ENCODE measurements at regions of chrX and their contacts with region 1.

Region 1: GRCh38 chrX:68908071-68908470 is 79.2 kb downstream of the EFNB1 start:
- DNase-seq: no peak
- H3K4me3 ChIP-seq: no peak overlapping the region
- H3K27ac ChIP-seq: no peak overlapping the region
- H3K4me1 ChIP-seq: no peaks in the 10 kb centered on the region
- H3K27me3 ChIP-seq: no peaks in the 10 kb centered on the region
- CTCF ChIP-seq: no peak

Region 2: GRCh38 chrX:68842781-68843581 is 65.1 kb before region 1 on chrX:
- CTCF ChIA-PET with region 1: no interaction called
- dilution Hi-C with region 1: no loop called
- in situ Hi-C with region 1: no loop called
- intact Hi-C with region 1: no loop called
- DNase-seq: peak; percentile 60
- H3K4me3 ChIP-seq: no peak overlapping the region
- H3K27ac ChIP-seq: peak overlapping the region; percentile 50
- H3K4me1 ChIP-seq: peaks cover 57% of the 10 kb centered on the region
- H3K27me3 ChIP-seq: no peaks in the 10 kb centered on the region
- CTCF ChIP-seq: peak; percentile 12 to 21

Region 3: GRCh38 chrX:68950937-68951336 is 42.9 kb after region 1 on chrX:
- CTCF ChIA-PET with region 1: no interaction called
- dilution Hi-C with region 1: loop called (anchors 5 kb)
- in situ Hi-C with region 1: no loop called
- intact Hi-C with region 1: no loop called
- DNase-seq: no peak
- H3K4me3 ChIP-seq: no peak overlapping the region
- H3K27ac ChIP-seq: no peak overlapping the region
- H3K4me1 ChIP-seq: no peaks in the 10 kb centered on the region
- H3K27me3 ChIP-seq: no peaks in the 10 kb centered on the region
- CTCF ChIP-seq: no peak

Region 4: GRCh38 chrX:69014200-69014599 is 106.1 kb after region 1 on chrX:
- CTCF ChIA-PET with region 1: no interaction called
- dilution Hi-C with region 1: no loop called
- in situ Hi-C with region 1: no loop called
- intact Hi-C with region 1: no loop called
- DNase-seq: peak; percentile 17
- H3K4me3 ChIP-seq: no peak overlapping the region
- H3K27ac ChIP-seq: no peak overlapping the region
- H3K4me1 ChIP-seq: no peaks in the 10 kb centered on the region
- H3K27me3 ChIP-seq: no peaks in the 10 kb centered on the region
- CTCF ChIP-seq: no peak

Measured in mammary epithelial cell (primary cell).